IMR-90 (cell line): ENCODE measurements at regions of chr3 and their contacts with region 1.

Region 1: DNA sequence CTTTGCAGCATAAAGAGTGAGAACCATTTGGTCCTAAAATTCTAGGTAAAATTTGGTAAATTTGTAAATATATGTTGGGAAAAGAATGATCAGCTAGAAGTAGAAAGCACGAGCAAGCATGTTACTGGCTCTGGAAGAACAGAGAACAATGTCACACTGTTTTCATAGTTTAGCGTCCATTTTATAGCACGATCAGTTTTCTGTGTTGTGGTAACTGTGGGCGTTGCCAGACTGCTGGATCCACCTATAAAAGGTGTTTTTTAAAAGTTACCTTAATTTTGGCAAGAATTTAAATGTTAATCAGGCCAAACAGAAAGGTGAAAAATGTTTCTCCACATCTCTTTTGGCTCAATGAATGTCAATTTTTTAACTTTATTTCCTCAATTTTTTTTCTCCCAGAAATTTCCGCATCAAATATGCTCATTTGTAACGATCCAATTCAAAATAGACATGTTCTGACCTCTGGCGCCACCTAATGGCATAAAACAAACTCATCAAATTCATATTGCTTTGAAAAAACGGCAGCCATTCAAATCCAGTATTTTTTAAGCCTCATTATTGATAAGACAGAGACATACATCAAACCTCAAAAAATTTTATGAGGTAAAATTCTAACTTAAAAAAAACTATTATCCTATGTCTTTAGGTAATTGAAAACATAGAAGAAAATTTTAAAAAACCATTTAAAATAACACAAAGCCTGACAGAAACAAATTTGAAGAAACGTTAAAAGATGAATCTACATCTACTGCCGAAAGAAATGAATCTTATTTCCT is 5.5 kb upstream of the GP5 start:
- DNase-seq: peak; percentile 58
- ATAC-seq: no peak
- H3K4me3 ChIP-seq: no peak overlapping the region
- H3K27ac ChIP-seq: no peak overlapping the region
- H3K4me1 ChIP-seq: peaks cover 6% of the 10 kb centered on the region
- H3K27me3 ChIP-seq: no peaks in the 10 kb centered on the region
- CTCF ChIP-seq: peak; percentile 74
- POLR2A ChIP-seq: no peak
- RAD21 ChIP-seq: peak; percentile 69

Region 2: DNA sequence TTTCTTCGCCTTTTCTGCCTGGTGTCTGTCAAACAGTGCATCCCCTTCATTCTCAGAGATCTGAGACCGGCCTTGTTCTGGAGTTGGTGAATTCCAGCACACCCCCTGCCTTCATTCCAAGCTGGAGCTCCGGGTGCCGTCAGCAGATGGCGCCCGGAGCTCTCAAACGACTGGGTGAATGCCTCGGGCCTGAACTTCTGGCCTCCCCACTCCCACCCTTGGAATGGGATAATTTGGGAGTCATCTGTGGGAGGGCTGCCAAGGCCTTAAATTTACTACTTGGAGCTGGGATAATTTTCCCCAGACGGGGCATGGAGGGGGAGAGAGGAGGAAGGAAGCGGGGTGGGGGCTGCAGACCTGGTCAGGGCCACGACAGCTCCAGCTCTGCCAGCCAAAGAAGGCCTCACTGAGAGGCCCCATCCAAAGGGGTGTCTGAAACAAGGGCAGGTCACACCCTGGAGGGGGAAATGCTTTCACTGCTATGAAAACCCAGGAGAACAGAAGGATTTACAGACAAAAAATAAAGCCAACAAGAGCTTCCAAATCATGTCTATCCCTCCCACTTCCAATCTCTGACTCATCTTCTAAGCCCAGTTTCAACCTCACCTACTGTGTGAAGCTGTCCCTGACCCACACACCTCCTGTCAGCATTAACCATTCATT is 623.6 kb before region 1 on chr3:
- CTCF ChIA-PET with region 1: no interaction called
- POLR2A ChIA-PET with region 1: no interaction called
- dilution Hi-C with region 1: no loop called
- in situ Hi-C with region 1: no loop called
- intact Hi-C with region 1: loop called (anchors 2 kb)
- DNase-seq: peak; percentile 54
- ATAC-seq: peak; percentile 92
- H3K4me3 ChIP-seq: no peak overlapping the region
- H3K27ac ChIP-seq: no peak overlapping the region
- H3K4me1 ChIP-seq: no peaks in the 10 kb centered on the region
- H3K27me3 ChIP-seq: peaks cover 50% of the 10 kb centered on the region
- CTCF ChIP-seq: peak; percentile 81
- POLR2A ChIP-seq: no peak
- RAD21 ChIP-seq: peak; percentile 86

Region 3: DNA sequence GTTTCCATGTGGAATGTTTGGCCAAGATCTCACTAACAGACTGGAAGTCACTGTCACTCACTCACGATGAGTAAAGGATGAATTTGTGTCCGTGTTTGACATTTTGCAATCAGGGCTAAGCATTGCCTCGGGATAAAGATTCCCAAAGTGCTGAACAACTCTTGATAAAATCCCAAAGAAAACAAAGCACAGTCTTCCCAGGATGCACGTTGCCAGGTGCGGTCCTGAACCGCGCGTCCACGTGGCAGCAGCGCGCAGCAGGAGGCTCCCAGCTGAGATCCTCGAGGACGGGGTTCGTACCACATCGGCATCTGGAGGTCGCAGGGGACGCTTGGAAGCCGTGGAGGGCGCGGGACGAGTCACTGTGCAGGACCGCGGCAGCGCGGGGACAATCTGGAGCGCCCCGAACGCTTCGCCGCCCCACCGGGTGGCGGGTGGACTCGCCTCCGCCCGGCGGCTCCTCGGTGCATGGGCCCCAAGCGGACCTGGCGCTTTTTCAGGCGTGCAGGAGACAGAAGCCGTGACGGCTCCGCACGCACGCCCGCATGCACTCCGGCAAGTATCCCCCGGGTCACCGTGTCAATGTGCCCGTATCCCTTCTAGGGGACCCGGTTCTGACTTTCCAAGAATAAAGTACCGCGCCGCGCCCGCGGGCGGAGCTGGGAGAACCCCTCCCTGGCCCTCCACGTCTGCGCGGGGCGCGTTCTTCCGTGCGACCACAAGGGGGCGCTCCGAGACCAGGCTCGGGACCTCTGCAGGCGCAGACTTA is 71.2 kb before region 1 on chr3:
- CTCF ChIA-PET with region 1: interaction called, 6 read pairs
- POLR2A ChIA-PET with region 1: no interaction called
- dilution Hi-C with region 1: no loop called
- in situ Hi-C with region 1: loop called (anchors 5 kb)
- intact Hi-C with region 1: loop called (anchors 1 kb)
- DNase-seq: peak; percentile 80
- ATAC-seq: peak; percentile 90
- H3K4me3 ChIP-seq: peak overlapping the region; percentile 53
- H3K27ac ChIP-seq: no peak overlapping the region
- H3K4me1 ChIP-seq: peaks cover 12% of the 10 kb centered on the region
- H3K27me3 ChIP-seq: no peaks in the 10 kb centered on the region; the same call in 1 of the 2 replicates
- CTCF ChIP-seq: peak; percentile 97
- POLR2A ChIP-seq: 0 out of 2 replicates have a peak, but pooled peaks have one; percentile 38
- RAD21 ChIP-seq: peak; percentile 100

Region 4: DNA sequence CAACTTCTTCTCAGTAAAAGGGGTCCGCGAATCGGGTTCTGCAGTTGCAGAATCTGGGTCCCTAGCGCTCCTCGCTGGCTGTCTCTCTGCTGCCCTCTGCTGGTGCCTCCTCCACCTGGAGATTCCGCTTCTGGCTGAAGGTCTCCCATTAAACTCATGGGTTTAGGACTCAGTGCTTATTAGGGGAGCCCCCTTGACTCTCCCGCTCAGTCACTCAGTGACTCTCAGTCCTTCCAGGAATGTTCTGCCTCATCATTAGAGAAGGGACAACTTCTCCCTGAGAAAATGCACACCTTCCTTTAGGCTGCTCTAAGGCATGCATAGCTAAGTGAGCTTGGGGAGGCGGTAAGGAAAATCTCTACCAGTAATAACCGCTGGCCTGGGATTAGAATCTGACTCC is 60.5 kb before region 1 on chr3:
- CTCF ChIA-PET with region 1: interaction called, 18 read pairs
- POLR2A ChIA-PET with region 1: interaction called, 5 read pairs
- dilution Hi-C with region 1: no loop called
- in situ Hi-C with region 1: loop called (anchors 5 kb)
- intact Hi-C with region 1: loop called (anchors 1 kb)
- DNase-seq: peak; percentile 58
- ATAC-seq: peak; percentile 77
- H3K4me3 ChIP-seq: no peak overlapping the region
- H3K27ac ChIP-seq: no peak overlapping the region
- H3K4me1 ChIP-seq: peaks cover 8% of the 10 kb centered on the region
- H3K27me3 ChIP-seq: no peaks in the 10 kb centered on the region
- CTCF ChIP-seq: peak; percentile 79
- POLR2A ChIP-seq: no peak
- RAD21 ChIP-seq: peak; percentile 60

Region 5: DNA sequence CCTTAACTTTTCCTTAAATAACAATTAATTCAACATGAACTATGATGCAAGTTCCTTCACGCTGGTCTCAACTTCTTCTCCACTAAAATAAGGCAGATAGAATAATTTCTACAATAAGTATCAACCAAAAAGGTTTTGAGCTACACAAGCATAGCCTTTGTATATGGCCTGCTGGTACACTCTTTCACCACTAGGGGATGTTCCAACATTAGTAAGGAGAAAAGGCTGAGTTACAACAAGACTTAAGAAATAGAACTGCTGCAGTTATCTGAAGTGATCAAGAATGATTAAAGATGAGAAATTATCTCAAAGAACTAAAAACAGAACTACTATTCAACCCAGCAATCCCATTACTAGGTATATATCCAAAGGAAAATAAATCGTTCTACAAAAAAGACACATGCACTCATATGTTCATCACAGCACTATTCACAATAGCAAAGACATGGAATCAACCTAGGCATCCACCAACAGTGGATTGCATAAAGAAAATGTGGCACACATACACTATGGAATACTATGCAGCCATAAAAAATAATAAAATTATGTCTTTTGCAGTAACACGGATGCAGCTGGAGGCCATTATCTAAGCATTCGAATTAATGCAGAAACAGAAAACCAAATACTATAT is 67.9 kb after region 1 on chr3:
- CTCF ChIA-PET with region 1: no interaction called
- POLR2A ChIA-PET with region 1: no interaction called
- dilution Hi-C with region 1: no loop called
- in situ Hi-C with region 1: no loop called
- intact Hi-C with region 1: no loop called
- DNase-seq: peak; percentile 82
- ATAC-seq: peak; percentile 80
- H3K4me3 ChIP-seq: no peak overlapping the region
- H3K27ac ChIP-seq: no peak overlapping the region
- H3K4me1 ChIP-seq: peaks cover 26% of the 10 kb centered on the region
- H3K27me3 ChIP-seq: no peaks in the 10 kb centered on the region
- CTCF ChIP-seq: peak; percentile 97
- POLR2A ChIP-seq: 0 out of 2 replicates have a peak, but pooled peaks have one; percentile 34
- RAD21 ChIP-seq: peak; percentile 92

Region 6: GRCh38 chr3:194782698-194783404 is 378.3 kb after region 1 on chr3:
- CTCF ChIA-PET with region 1: no interaction called
- POLR2A ChIA-PET with region 1: no interaction called
- dilution Hi-C with region 1: no loop called
- in situ Hi-C with region 1: no loop called
- intact Hi-C with region 1: no loop called
- DNase-seq: peak; percentile 4
- ATAC-seq: peak; percentile 32
- H3K4me3 ChIP-seq: no peak overlapping the region
- H3K27ac ChIP-seq: no peak overlapping the region
- H3K4me1 ChIP-seq: no peaks in the 10 kb centered on the region
- H3K27me3 ChIP-seq: peaks cover 21% of the 10 kb centered on the region
- CTCF ChIP-seq: no peak
- POLR2A ChIP-seq: no peak
- RAD21 ChIP-seq: no peak

Region 7: GRCh38 chr3:195210266-195210973 is 805.9 kb after region 1 on chr3:
- CTCF ChIA-PET with region 1: no interaction called
- POLR2A ChIA-PET with region 1: interaction called, 11 read pairs
- dilution Hi-C with region 1: no loop called
- in situ Hi-C with region 1: no loop called
- intact Hi-C with region 1: no loop called
- DNase-seq: peak; percentile 88
- ATAC-seq: peak; percentile 62
- H3K4me3 ChIP-seq: no peak overlapping the region
- H3K27ac ChIP-seq: peak overlapping the region; percentile 99
- H3K4me1 ChIP-seq: peaks cover 30% of the 10 kb centered on the region
- H3K27me3 ChIP-seq: no peaks in the 10 kb centered on the region
- CTCF ChIP-seq: no peak
- POLR2A ChIP-seq: no peak
- RAD21 ChIP-seq: no peak